Right ventricle myocardium inferior (tissue), 1 donor: ENCODE measurements at regions of chr7 and their contacts with region 1.

Region 1: GRCh38 chr7:136964347-136964746 is 95.9 kb downstream of the CHRM2 start:
- DNase-seq: no peak
- ATAC-seq: peak; percentile 75

Region 2: DNA sequence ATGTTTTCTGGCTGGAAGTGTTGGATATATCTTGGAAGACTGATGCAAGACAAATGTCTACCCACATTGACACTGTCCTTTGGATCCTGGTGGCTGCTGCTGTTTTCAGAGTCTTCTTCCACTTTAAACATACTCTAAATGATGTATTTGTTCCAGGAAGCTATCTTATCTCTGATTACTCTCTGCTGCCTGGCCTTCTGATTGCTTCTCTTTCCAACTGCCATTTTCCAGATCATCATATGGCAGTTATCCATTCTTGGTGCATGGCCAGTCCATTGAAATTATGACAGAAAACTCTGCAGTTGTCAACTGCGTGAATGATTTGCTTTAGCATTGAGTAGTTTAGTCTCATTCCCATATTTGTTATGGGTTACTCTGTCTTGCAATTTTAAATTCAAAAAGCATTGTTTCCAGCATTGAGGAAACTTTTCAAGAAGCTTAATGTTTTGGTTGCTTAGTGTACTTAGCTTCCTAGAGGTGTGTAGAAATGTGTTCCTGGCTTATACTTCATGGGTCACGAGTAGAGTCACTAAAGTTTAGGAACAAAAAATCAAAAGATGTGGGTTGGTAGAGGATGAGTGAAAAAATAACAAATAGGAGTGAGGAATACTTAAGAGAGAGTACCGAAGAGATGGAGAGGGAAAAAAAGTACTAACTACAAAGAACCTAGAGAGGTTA is 718.9 kb before region 1 on chr7:
- intact Hi-C with region 1: no loop called
- DNase-seq: no peak
- ATAC-seq: no peak

Region 3: DNA sequence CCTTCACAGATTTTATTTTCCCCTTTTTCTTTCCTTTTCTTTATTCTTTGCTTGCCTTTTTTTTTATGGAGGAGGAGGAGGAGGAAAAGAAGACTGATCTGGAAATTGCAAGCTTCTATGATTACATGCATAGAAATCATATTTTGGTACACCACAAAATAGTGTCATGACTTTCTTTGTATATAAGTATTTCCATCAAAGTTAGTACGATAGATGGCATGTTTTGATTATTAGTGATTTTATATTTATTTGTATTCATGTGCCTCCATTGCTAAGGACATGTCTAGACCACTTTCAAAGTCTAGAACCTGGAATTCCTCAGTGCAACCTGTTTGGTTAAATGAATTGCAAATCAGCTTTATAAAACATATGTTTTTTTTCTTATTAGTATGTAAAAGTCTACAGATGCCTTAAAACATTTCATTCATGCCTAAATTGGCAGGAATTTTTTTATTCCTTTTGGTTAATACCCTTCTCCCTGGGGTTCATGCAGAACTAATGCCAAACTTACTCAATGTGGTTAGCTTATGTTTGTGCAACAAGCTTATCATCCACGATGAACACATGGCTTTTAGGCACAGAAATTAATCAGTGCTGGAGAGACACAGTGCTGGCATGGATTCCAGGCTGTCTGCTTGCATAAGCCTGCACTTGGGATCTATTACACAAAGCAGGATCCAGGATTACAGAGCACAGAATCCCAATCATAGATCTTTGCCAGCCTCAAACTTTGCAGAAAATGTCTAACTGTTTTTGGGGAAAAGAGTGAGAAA is 117.2 kb after region 1 on chr7:
- intact Hi-C with region 1: loop called (anchors 5 kb)
- DNase-seq: peak; percentile 81
- ATAC-seq: peak; percentile 96